H1 (cell line): ENCODE measurements at regions of chr2 and their contacts with region 1.

Region 1: GRCh38 chr2:20172273-20173055 is 52.5 kb downstream of the SDC1 start:
- DNase-seq: no peak
- H3K4me3 ChIP-seq: no peak overlapping the region
- H3K27ac ChIP-seq: no peak overlapping the region
- H3K4me1 ChIP-seq: peaks cover 0 to 12% (median 3%) of the 10 kb centered on the region in 4 experiments; a peak in 3 of 7 replicates
- H3K27me3 ChIP-seq: no peaks in the 10 kb centered on the region
- CTCF ChIP-seq: no peak
- EP300 ChIP-seq: no peak
- POLR2A ChIP-seq: no peak
- RAD21 ChIP-seq: no peak

Region 2: GRCh38 chr2:20186078-20186854 is 13.8 kb after region 1 on chr2:
- CTCF ChIA-PET with region 1: interaction called, 63 read pairs
- POLR2A ChIA-PET with region 1: interaction called, 3 read pairs
- DNase-seq: no peak
- H3K4me3 ChIP-seq: no peak overlapping the region
- H3K27ac ChIP-seq: no peak overlapping the region
- H3K4me1 ChIP-seq: peaks cover 0 to 39% (median 21%) of the 10 kb centered on the region in 4 experiments; a peak in 6 of 7 replicates
- H3K27me3 ChIP-seq: no peaks in the 10 kb centered on the region; a peak in 3 of 7 replicates
- CTCF ChIP-seq: no peak
- EP300 ChIP-seq: no peak
- POLR2A ChIP-seq: no peak
- RAD21 ChIP-seq: no peak

Region 3: DNA sequence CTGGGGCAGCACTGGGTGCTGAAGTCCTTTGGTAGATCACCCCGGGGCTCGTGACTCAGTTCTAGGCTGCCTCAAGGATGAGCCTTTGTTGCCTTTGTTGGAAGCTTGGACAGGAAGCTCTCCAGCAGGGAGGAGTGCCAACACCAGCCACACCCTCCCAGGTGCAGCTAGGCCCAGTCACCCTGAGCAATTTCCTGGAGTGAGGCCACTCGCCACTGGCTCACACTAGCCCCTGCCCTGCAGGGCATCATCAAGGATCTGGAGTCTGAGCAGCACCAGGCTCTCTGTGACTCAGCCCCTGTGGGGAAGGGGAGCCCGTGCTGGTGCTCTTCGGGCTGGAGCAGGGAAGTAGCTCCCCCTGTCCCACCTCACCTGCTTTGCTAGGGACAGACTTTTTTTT is 59.2 kb after region 1 on chr2:
- CTCF ChIA-PET with region 1: interaction called, 10 read pairs
- POLR2A ChIA-PET with region 1: no interaction called
- DNase-seq: peak; percentile 68 to 72
- H3K4me3 ChIP-seq: no peak overlapping the region
- H3K27ac ChIP-seq: no peak overlapping the region
- H3K4me1 ChIP-seq: peaks cover 3 to 11% (median 5%) of the 10 kb centered on the region in 4 experiments
- H3K27me3 ChIP-seq: no peaks in the 10 kb centered on the region; a peak in 1 of 7 replicates
- CTCF ChIP-seq: peak in 2 of 3 experiments; percentile 16 to 33; a peak in 2 of 4 replicates
- EP300 ChIP-seq: no peak
- POLR2A ChIP-seq: no peak
- RAD21 ChIP-seq: peak; percentile 32 to 33; a peak in 3 of 4 replicates

Region 4: GRCh38 chr2:20282916-20283592 is 110.6 kb after region 1 on chr2:
- CTCF ChIA-PET with region 1: no interaction called
- POLR2A ChIA-PET with region 1: no interaction called
- DNase-seq: no peak
- H3K4me3 ChIP-seq: no peak overlapping the region
- H3K27ac ChIP-seq: no peak overlapping the region
- H3K4me1 ChIP-seq: no peaks in the 10 kb centered on the region
- H3K27me3 ChIP-seq: no peaks in the 10 kb centered on the region
- CTCF ChIP-seq: no peak
- EP300 ChIP-seq: no peak
- POLR2A ChIP-seq: no peak
- RAD21 ChIP-seq: no peak